CD4-positive, alpha-beta T cell (primary cell): ENCODE measurements at regions of chr1 and their contacts with region 1.

Region 1: GRCh38 chr1:89615676-89616598 is 17.0 kb upstream of the LRRC8C start:
- DNase-seq: peak in 3 of 14 experiments; percentile 48 to 66 (median 56)
- ATAC-seq: no peak
- H3K4me3 ChIP-seq: no peak overlapping the region
- H3K4me3 Mint-ChIP-seq: no peak overlapping the region
- H3K27ac ChIP-seq: no peak overlapping the region
- H3K27ac Mint-ChIP-seq: peak overlapping the region; percentile 99
- H3K4me1 ChIP-seq: peaks cover 42% of the 10 kb centered on the region
- H3K4me1 Mint-ChIP-seq: peaks cover 90% of the 10 kb centered on the region
- H3K27me3 ChIP-seq: no peaks in the 10 kb centered on the region
- H3K27me3 Mint-ChIP-seq: no peaks in the 10 kb centered on the region
- CTCF ChIP-seq: peak; percentile 17

Region 2: DNA sequence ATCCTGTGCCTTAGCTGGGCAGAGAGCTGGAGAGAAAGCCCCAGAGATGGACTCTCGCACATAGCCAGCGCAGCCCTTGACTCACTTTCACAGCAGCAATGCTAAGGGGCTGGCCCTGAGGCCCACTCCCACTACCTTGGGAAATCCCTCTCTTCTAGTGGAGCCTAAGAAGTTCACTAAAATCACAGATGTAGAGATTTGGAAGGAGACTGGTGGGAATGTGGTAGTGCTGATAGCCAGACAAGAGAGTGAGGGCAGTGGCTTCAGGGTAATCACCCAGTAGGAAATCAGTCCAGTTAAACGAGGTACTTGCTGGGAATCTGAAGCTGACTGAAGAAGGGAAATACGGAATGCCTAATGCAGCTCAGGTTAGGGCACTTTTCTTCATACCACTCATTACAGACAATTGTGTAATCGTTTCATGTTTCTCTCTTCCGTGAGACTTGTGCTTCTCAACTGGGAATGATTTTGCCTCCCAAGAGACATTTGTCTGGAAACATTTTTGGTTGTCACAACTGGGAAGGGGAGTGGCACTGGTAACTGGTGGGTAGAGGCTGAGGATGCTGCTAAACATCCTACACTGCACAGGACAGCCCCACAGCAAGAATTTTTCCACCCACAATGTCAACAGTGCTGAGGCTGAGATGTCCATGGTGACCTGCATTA is 25.4 kb before region 1 on chr1:
- CTCF ChIA-PET with region 1: interaction called, 34 read pairs
- POLR2A ChIA-PET with region 1: interaction called, 217 read pairs
- intact Hi-C with region 1: no loop called
- DNase-seq: no peak
- ATAC-seq: no peak
- H3K4me3 ChIP-seq: no peak overlapping the region
- H3K4me3 Mint-ChIP-seq: no peak overlapping the region
- H3K27ac ChIP-seq: no peak overlapping the region
- H3K27ac Mint-ChIP-seq: peak overlapping the region; percentile 50
- H3K4me1 ChIP-seq: peaks cover 8% of the 10 kb centered on the region
- H3K4me1 Mint-ChIP-seq: peaks cover 81% of the 10 kb centered on the region
- H3K27me3 ChIP-seq: no peaks in the 10 kb centered on the region
- H3K27me3 Mint-ChIP-seq: no peaks in the 10 kb centered on the region
- CTCF ChIP-seq: no peak

Region 3: GRCh38 chr1:89605692-89606091 is 10.2 kb before region 1 on chr1:
- CTCF ChIA-PET with region 1: interaction called, 6 read pairs
- POLR2A ChIA-PET with region 1: interaction called, 217 read pairs
- intact Hi-C with region 1: no loop called
- DNase-seq: no peak
- ATAC-seq: no peak
- H3K4me3 ChIP-seq: no peak overlapping the region
- H3K4me3 Mint-ChIP-seq: peak overlapping the region; percentile 56
- H3K27ac ChIP-seq: peak overlapping the region; percentile 80 to 91
- H3K27ac Mint-ChIP-seq: peak overlapping the region; percentile 99
- H3K4me1 ChIP-seq: peaks cover 81% of the 10 kb centered on the region
- H3K4me1 Mint-ChIP-seq: peaks cover 94% of the 10 kb centered on the region
- H3K27me3 ChIP-seq: no peaks in the 10 kb centered on the region
- H3K27me3 Mint-ChIP-seq: no peaks in the 10 kb centered on the region
- CTCF ChIP-seq: no peak

Region 4: GRCh38 chr1:89701746-89702241 is 85.9 kb after region 1 on chr1:
- CTCF ChIA-PET with region 1: no interaction called
- POLR2A ChIA-PET with region 1: interaction called, 10 read pairs
- intact Hi-C with region 1: no loop called
- DNase-seq: no peak
- ATAC-seq: no peak
- H3K4me3 ChIP-seq: no peak overlapping the region
- H3K4me3 Mint-ChIP-seq: no peak overlapping the region
- H3K27ac ChIP-seq: no peak overlapping the region
- H3K27ac Mint-ChIP-seq: peak overlapping the region; percentile 35
- H3K4me1 ChIP-seq: peaks cover 26% of the 10 kb centered on the region
- H3K4me1 Mint-ChIP-seq: peaks cover 76% of the 10 kb centered on the region
- H3K27me3 ChIP-seq: no peaks in the 10 kb centered on the region
- H3K27me3 Mint-ChIP-seq: no peaks in the 10 kb centered on the region
- CTCF ChIP-seq: no peak